ENCODE measurements at regions of chr2 and their contacts with region 1.

Region 1: DNA sequence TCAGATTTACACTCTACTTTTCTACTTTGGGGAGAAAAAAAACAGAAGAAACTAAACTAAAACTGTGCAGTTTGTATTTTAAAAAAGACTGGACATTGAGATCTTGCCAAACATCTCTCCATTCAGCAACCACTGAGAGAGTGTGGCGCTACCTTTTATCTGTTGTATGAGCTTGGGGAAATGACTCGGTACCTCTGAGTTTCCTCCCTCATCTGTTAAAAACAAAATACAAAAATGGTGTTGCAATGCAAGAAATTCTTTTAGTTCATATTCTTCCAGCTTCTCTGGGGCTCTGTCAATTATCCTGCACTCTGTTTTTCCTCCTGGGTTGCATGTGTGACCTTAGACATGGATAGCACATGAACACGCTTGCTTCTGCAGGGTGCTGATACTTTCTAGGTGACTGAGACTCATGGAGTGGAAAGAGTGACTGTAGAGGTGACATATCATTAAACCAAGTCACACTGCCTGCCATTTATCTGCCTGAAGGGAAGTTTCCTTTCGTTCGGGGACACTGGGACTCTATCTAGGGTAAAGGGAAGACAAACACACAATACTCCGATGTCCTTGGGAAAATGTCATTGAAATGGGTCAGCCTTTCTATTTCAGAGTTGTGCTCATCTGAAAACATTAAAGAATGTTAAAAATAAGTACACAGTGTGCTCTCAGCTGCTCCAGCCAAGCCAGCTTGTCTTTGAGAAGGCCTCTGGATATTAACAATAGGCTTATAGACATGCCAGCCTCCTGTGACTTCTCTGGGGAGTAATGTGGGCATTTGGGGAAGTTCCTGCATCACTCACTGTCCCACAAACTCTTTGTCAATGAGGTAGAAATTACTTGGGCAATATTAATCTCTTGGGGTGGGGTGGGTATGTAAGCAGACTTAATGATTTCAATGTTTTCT is 91.4 kb downstream of the TRIB2 start:
- DNase-seq: peak in 1 of 2 donors; percentile 23
- ATAC-seq: peak; percentile 46 to 92 (median 76)
- H3K4me3 ChIP-seq: no peak overlapping the region
- H3K27ac ChIP-seq: peak overlapping the region; percentile 28 to 87 (median 67)
- H3K4me1 ChIP-seq: peaks cover 10 to 70% (median 42%) of the 10 kb centered on the region in 9 donors
- H3K27me3 ChIP-seq: no peaks in the 10 kb centered on the region
- CTCF ChIP-seq: no peak

Region 2: GRCh38 chr2:12742891-12743290 is 65.3 kb before region 1 on chr2:
- intact Hi-C with region 1: loop called in 4 of 10 experiments (anchors 5 to 10 kb)
- DNase-seq: no peak
- ATAC-seq: no peak
- H3K4me3 ChIP-seq: no peak overlapping the region
- H3K27ac ChIP-seq: no peak overlapping the region
- H3K4me1 ChIP-seq: peaks cover 0 to 40% (median 13%) of the 10 kb centered on the region in 9 donors
- H3K27me3 ChIP-seq: no peaks in the 10 kb centered on the region
- CTCF ChIP-seq: no peak

Region 3: DNA sequence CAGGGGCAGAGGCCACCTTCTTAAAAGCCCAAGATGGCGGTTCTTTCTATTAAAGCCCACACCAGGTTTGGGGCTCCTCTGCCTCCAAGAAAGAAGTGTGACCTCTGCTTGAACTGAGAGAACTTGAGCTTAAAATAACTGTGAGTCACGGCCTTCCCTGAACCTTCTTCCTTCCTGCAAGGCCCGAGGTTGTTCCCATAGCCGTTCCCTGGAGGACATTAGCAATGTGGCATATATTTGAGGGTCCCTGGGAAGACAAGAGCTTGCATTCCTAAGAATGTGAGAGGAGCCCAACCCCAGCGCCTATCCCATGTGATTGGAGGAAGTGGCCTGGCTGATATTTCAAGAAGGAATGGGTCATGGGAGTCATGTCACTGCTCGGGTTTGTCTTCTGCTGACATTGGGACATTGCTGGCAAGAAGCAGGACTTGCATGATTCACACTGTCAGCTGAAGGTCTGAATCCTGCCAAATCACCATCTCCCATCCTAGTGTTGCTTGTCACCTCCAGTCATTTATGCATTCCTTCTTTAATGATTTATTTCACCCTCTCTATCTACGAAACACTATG is 76.6 kb after region 1 on chr2:
- intact Hi-C with region 1: loop called in 1 of 10 experiments (anchors 1 kb)
- DNase-seq: peak; percentile 30 to 69
- ATAC-seq: peak; percentile 82 to 95 (median 89)
- H3K4me3 ChIP-seq: no peak overlapping the region
- H3K27ac ChIP-seq: peak overlapping the region in 9 of 10 donors; percentile 32 to 76 (median 54)
- H3K4me1 ChIP-seq: peaks cover 11 to 30% (median 23%) of the 10 kb centered on the region in 9 donors
- H3K27me3 ChIP-seq: no peaks in the 10 kb centered on the region
- CTCF ChIP-seq: no peak